ENCODE measurements at regions of chr14 and their contacts with region 1.

Region 1: GRCh38 chr14:87380054-87380453 is 612.9 kb downstream of the GALC start:
- DNase-seq: no peak

Region 2: DNA sequence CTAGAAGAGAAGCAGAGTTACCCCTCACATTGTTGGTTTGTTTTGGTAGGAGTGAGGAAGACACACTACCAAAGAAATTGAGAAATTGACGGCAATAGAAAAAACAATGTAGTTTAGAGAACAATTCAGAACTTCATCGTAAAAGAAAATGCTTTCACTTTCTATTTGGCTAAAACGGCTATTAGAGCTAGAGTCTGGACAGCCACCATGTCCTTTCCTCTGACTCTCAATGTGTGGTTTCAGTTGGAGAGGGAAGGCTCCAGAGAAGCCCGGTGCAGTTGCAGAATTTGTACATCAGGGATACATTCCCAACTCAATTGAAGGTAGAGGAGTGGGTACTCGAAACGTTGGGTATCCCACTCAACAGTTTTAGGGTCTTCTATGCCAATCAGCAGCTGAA is 77.7 kb after region 1 on chr14:
- intact Hi-C with region 1: no loop called
- DNase-seq: no peak

Region 3: GRCh38 chr14:88312257-88312656 is 932.2 kb after region 1 on chr14:
- intact Hi-C with region 1: loop called in 1 of 2 experiments (anchors 5 kb)
- DNase-seq: no peak